Mammary epithelial cell (primary cell): ENCODE measurements at regions of chr6 and their contacts with region 1.

Region 1: DNA sequence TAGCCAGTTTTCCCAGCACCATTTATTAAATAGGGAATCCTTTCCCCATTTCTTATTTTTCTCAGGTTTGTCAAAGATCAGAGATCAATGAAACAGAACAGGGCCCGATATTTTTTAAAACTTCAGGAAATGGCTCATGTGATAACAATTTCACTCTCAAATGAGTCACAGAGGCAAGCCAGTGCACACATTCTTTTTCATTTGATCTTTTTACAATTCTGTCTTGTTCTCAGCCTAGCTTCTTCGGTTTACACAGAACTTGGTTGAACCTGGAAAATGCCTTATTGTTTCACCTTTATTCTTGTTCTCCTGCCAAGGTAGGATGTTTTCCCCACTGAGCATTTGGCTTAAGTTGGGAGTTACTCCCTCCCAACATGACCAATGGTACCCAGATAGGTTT is 258.9 kb downstream of the COL12A1 start:
- DNase-seq: peak; percentile 82
- H3K4me3 ChIP-seq: peak overlapping the region in 2 of 3 experiments; percentile 17
- H3K27ac ChIP-seq: peak overlapping the region; percentile 87
- H3K4me1 ChIP-seq: peaks cover 20% of the 10 kb centered on the region
- H3K27me3 ChIP-seq: no peaks in the 10 kb centered on the region
- CTCF ChIP-seq: no peak

Region 2: GRCh38 chr6:74899416-74899815 is 47.5 kb before region 1 on chr6:
- CTCF ChIA-PET with region 1: no interaction called
- dilution Hi-C with region 1: no loop called
- in situ Hi-C with region 1: no loop called
- intact Hi-C with region 1: loop called (anchors 1 kb)
- DNase-seq: peak; percentile 79
- H3K4me3 ChIP-seq: no peak overlapping the region
- H3K27ac ChIP-seq: peak overlapping the region; percentile 31
- H3K4me1 ChIP-seq: peaks cover 10% of the 10 kb centered on the region
- H3K27me3 ChIP-seq: no peaks in the 10 kb centered on the region
- CTCF ChIP-seq: peak; percentile 83 to 95

Region 3: DNA sequence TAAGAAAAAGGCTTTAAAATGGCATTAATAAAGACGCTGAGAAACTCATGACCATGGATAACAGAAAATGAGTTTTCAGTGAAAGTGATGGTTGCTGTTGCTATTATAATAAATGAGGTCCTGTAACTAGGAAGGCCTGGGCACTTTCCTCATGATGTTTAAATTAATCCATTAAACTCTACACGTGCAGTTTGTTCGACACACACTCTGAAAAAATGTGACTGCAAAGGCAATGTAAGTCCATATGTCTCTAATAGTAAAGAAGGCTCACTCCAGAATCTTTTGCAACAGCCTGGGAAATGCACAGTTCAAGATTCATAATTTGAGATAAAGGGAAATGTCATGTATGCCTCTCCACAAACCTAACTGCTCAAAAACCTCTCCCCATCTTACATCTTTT is 105.5 kb after region 1 on chr6:
- CTCF ChIA-PET with region 1: no interaction called
- dilution Hi-C with region 1: no loop called
- in situ Hi-C with region 1: no loop called
- intact Hi-C with region 1: no loop called
- DNase-seq: no peak
- H3K4me3 ChIP-seq: no peak overlapping the region
- H3K27ac ChIP-seq: no peak overlapping the region
- H3K4me1 ChIP-seq: no peaks in the 10 kb centered on the region
- H3K27me3 ChIP-seq: no peaks in the 10 kb centered on the region
- CTCF ChIP-seq: no peak